PC-3 (cell line): ENCODE measurements at regions of chr6 and their contacts with region 1.

Region 1: GRCh38 chr6:42197555-42198362 is 3.0 kb upstream of the GUCA1B start:
- DNase-seq: peak; percentile 94
- ATAC-seq: peak; percentile 82
- H3K4me3 ChIP-seq: no peak overlapping the region
- H3K27ac ChIP-seq: peak overlapping the region; percentile 89
- H3K4me1 ChIP-seq: peaks cover 55% of the 10 kb centered on the region
- H3K27me3 ChIP-seq: no peaks in the 10 kb centered on the region
- CTCF ChIP-seq: peak; percentile 37; the same call in 1 of the 2 replicates

Region 2: DNA sequence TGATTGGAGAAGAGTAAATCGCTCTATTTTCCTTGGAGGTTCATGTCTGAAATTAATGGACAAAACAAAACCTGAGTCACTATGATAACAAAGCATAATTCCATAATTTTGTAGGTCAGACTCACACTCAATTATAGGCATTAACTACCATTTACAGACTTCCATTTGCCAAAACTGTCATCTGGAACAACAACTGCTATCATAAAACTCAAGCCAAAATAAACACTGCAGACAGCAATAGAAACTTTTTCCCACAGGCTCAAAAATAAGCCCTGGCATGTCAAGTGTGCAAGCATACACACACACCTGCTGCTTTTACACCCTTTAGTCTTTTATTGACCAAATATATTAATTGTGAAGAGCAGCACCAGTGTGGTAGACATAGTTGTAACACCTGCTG is 12.8 kb after region 1 on chr6:
- CTCF ChIA-PET with region 1: interaction called, 3 read pairs
- POLR2A ChIA-PET with region 1: no interaction called
- intact Hi-C with region 1: loop called (anchors 1 kb)
- DNase-seq: peak; percentile 42
- ATAC-seq: peak; percentile 8
- H3K4me3 ChIP-seq: no peak overlapping the region
- H3K27ac ChIP-seq: peak overlapping the region; percentile 91
- H3K4me1 ChIP-seq: peaks cover 90% of the 10 kb centered on the region
- H3K27me3 ChIP-seq: no peaks in the 10 kb centered on the region
- CTCF ChIP-seq: no peak

Region 3: GRCh38 chr6:42224222-42224989 is 26.6 kb after region 1 on chr6:
- CTCF ChIA-PET with region 1: no interaction called
- POLR2A ChIA-PET with region 1: no interaction called
- intact Hi-C with region 1: loop called (anchors 1 kb)
- DNase-seq: peak; percentile 99
- ATAC-seq: peak; percentile 39
- H3K4me3 ChIP-seq: peak overlapping the region; percentile 60
- H3K27ac ChIP-seq: peak overlapping the region; percentile 98
- H3K4me1 ChIP-seq: peaks cover 91% of the 10 kb centered on the region
- H3K27me3 ChIP-seq: no peaks in the 10 kb centered on the region
- CTCF ChIP-seq: no peak